ENCODE measurements at regions of chr4 and their contacts with region 1.

Region 1: GRCh38 chr4:184649026-184649970 is at the starts of genes CASP3 and PRIMPOL:
- DNase-seq: peak; percentile 97 to 99
- ATAC-seq: peak; percentile 92 to 98 (median 96)
- H3K4me3 ChIP-seq: peak within 1 kb of the TSS; percentile 72 to 96 (median 84)
- H3K27ac ChIP-seq: peak within 1 kb of the TSS; percentile 87 to 100 (median 98)
- H3K4me1 ChIP-seq: peaks cover 13 to 60% (median 50%) of the 10 kb centered on the region in 9 donors
- H3K27me3 ChIP-seq: no peaks in the 10 kb centered on the region
- CTCF ChIP-seq: peak in 8 of 9 donors; percentile 10 to 59 (median 38)
- total RNA-seq, gene CASP3: 7.9 to 24.8 (median 13.5) TPM
- total RNA-seq, gene PRIMPOL: 7.2 to 13.7 (median 10.8) TPM

Region 2: GRCh38 chr4:184733654-184734524 is 84.6 kb after region 1 on chr4 and contains the start of gene CENPU:
- intact Hi-C with region 1: loop called in 6 of 10 experiments (anchors 2 to 10 kb)
- DNase-seq: peak; percentile 96
- ATAC-seq: peak; percentile 98 to 99 (median 99)
- H3K4me3 ChIP-seq: peak within 1 kb of the TSS; percentile 52 to 98 (median 75)
- H3K27ac ChIP-seq: peak within 1 kb of the TSS in 9 of 10 donors; percentile 34 to 84 (median 63)
- H3K4me1 ChIP-seq: peaks cover 0 to 27% (median 15%) of the 10 kb centered on the region in 9 donors
- H3K27me3 ChIP-seq: no peaks in the 10 kb centered on the region
- CTCF ChIP-seq: no peak
- total RNA-seq, gene CENPU: 0.62 to 4.6 (median 1.4) TPM

Measured in heart right ventricle (tissue), 16 donors.